Endothelial cell of umbilical vein (primary cell): ENCODE measurements at regions of chr2 and their contacts with region 1.

Region 1: DNA sequence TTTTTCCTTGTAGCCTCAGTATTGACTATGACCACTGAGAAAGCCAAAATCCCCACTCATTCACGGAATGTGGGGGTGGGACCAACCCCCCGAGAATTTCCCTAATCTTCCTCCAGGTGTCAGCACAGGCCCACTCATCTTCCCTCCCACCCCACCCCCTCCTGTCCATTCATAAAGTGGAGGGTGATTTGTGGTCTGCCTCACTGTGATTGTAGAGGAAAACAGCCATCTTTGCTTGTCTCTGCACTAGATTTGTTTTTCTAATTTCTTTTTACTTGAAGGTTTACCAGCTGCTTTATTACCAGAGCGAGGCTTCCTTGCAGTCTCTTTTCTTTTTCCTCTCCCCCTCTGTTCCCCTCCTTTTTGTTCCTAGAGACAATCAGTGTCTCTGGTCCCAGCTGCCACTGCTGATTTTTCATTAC is 171.8 kb downstream of the ICOS start:
- DNase-seq: peak; percentile 73
- H3K4me3 ChIP-seq: no peak overlapping the region
- H3K27ac ChIP-seq: peak overlapping the region; percentile 74
- H3K4me1 ChIP-seq: peaks cover 47% of the 10 kb centered on the region
- H3K27me3 ChIP-seq: no peaks in the 10 kb centered on the region
- CTCF ChIP-seq: peak; percentile 25 to 59
- POLR2A ChIP-seq: no peak

Region 2: GRCh38 chr2:204145263-204145751 is 37.0 kb after region 1 on chr2:
- CTCF ChIA-PET with region 1: interaction called, 22 read pairs
- POLR2A ChIA-PET with region 1: interaction called, 3 read pairs
- dilution Hi-C with region 1: no loop called
- intact Hi-C with region 1: loop called (anchors 1 kb)
- DNase-seq: peak; percentile 78
- H3K4me3 ChIP-seq: peak overlapping the region in 2 of 3 experiments; percentile 20 to 46
- H3K27ac ChIP-seq: no peak overlapping the region
- H3K4me1 ChIP-seq: peaks cover 4% of the 10 kb centered on the region
- H3K27me3 ChIP-seq: peaks cover 0 to 6% of the 10 kb centered on the region in 2 experiments
- CTCF ChIP-seq: peak; percentile 89 to 91
- POLR2A ChIP-seq: no peak

Region 3: GRCh38 chr2:204325468-204325867 is 217.1 kb after region 1 on chr2:
- CTCF ChIA-PET with region 1: interaction called, 5 read pairs
- POLR2A ChIA-PET with region 1: no interaction called
- dilution Hi-C with region 1: no loop called
- intact Hi-C with region 1: loop called (anchors 1 kb)
- DNase-seq: peak; percentile 89
- H3K4me3 ChIP-seq: no peak overlapping the region
- H3K27ac ChIP-seq: no peak overlapping the region
- H3K4me1 ChIP-seq: peaks cover 19% of the 10 kb centered on the region
- H3K27me3 ChIP-seq: no peaks in the 10 kb centered on the region
- CTCF ChIP-seq: peak; percentile 61 to 68
- POLR2A ChIP-seq: no peak

Region 4: GRCh38 chr2:204691911-204692510 is 583.7 kb after region 1 on chr2:
- CTCF ChIA-PET with region 1: no interaction called
- POLR2A ChIA-PET with region 1: no interaction called
- dilution Hi-C with region 1: no loop called
- intact Hi-C with region 1: loop called (anchors 1 kb)
- DNase-seq: peak; percentile 90
- H3K4me3 ChIP-seq: no peak overlapping the region
- H3K27ac ChIP-seq: peak overlapping the region; percentile 36
- H3K4me1 ChIP-seq: peaks cover 18% of the 10 kb centered on the region
- H3K27me3 ChIP-seq: no peaks in the 10 kb centered on the region
- CTCF ChIP-seq: peak; percentile 68 to 72
- POLR2A ChIP-seq: no peak

Region 5: DNA sequence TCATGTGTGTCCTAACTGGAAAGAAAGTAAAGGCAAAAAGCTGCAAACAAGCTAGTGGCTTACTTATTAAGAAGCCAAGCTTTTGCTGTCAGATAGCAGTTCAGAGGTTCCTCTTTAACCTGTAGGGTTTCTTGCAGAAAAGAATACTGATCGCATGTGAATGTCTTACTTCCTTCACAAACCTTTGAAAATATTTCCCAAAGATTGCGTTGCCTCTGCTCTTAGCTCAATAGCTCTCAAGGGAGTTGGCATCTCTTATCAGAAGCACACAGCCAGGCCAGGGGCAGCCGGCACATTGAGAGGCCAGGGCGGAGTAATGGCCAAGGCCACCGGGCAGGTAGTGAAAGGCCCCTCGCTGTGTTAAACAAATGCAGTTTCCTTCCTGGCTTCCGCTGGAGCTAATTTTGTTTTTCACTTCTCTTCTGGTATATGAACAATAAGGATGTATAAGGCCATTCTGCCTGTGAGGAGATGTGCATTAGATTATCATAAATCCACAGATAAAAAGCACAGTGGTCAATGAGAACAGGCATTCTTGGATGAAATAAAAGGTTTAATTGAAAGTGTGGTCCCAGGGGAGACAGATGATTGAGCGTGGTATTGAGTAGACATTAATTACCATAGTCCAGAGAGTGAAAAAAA is 1031.6 kb after region 1 on chr2:
- CTCF ChIA-PET with region 1: no interaction called
- POLR2A ChIA-PET with region 1: no interaction called
- dilution Hi-C with region 1: no loop called
- intact Hi-C with region 1: loop called (anchors 2 kb)
- DNase-seq: peak; percentile 99
- H3K4me3 ChIP-seq: no peak overlapping the region
- H3K27ac ChIP-seq: peak overlapping the region; percentile 20
- H3K4me1 ChIP-seq: peaks cover 16% of the 10 kb centered on the region
- H3K27me3 ChIP-seq: no peaks in the 10 kb centered on the region
- CTCF ChIP-seq: no peak
- POLR2A ChIP-seq: peak; percentile 58

Region 6: DNA sequence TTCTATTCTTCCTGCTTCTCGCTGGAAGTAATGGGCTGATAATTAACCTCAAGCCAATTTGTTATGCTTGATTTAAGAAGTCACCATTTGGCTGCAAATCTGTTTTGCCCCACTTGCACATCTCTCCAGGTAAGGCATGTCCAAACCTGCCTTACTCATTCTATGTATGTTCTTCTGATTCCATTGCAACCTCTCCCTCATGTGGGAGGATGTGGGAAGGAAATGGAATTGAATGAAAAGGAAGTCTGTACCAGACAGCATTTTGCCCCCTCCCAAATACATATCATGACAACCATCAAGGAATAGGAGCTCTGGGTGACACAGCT is 1705.7 kb after region 1 on chr2:
- CTCF ChIA-PET with region 1: no interaction called
- POLR2A ChIA-PET with region 1: no interaction called
- dilution Hi-C with region 1: no loop called
- intact Hi-C with region 1: loop called (anchors 5 kb)
- DNase-seq: peak; percentile 40
- H3K4me3 ChIP-seq: no peak overlapping the region
- H3K27ac ChIP-seq: peak overlapping the region; percentile 31
- H3K4me1 ChIP-seq: peaks cover 5% of the 10 kb centered on the region
- H3K27me3 ChIP-seq: peaks cover 2 to 13% of the 10 kb centered on the region in 2 experiments
- CTCF ChIP-seq: no peak
- POLR2A ChIP-seq: no peak

Region 7: DNA sequence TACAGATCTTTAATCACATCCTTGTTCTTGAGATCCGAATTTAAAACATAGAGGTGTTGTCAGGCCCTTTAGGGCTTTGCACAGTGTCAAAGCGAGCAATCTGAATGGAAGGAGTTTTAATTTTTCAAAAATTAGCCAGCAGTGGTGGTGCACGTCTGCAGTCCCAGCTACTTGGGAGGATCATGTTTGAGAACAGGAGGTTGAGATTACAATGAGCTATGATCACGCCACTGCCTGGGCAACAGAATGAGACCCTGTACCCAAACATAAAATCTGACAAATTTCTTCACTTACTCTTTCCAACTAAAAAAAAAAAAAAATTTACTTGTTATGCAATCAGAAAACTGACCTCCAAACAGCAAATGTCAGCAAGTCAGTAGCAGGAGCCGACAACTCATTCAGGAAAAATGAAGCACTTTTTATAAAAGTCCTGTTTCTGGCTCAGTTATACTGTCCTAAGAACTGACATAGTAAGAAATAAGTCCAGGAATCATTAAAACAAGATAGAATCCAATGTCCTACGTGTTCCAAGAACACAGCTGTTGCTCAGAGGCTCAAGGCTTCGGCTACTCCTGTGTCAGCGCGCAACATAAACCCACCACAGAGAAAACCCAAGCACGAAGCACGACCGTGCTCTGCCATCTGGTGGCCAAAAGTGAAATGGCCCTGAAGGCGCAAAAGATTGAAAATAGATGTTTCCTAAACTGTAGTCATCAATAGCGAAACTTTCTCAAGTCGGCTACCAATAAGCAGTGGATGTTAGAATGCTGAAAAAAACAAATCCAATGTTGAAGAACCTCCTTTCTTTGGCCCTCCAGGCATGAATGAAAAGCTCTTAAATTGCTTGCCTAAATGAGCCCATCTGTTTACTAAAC is 1839.5 kb after region 1 on chr2:
- CTCF ChIA-PET with region 1: interaction called, 3 read pairs
- POLR2A ChIA-PET with region 1: no interaction called
- dilution Hi-C with region 1: no loop called
- intact Hi-C with region 1: loop called (anchors 5 kb)
- DNase-seq: peak; percentile 74
- H3K4me3 ChIP-seq: no peak overlapping the region
- H3K27ac ChIP-seq: no peak overlapping the region
- H3K4me1 ChIP-seq: peaks cover 17% of the 10 kb centered on the region
- H3K27me3 ChIP-seq: peaks cover 3 to 7% of the 10 kb centered on the region in 2 experiments
- CTCF ChIP-seq: peak; percentile 84 to 94
- POLR2A ChIP-seq: no peak